ENCODE measurements at regions of chr7 and their contacts with region 1.

Region 1: DNA sequence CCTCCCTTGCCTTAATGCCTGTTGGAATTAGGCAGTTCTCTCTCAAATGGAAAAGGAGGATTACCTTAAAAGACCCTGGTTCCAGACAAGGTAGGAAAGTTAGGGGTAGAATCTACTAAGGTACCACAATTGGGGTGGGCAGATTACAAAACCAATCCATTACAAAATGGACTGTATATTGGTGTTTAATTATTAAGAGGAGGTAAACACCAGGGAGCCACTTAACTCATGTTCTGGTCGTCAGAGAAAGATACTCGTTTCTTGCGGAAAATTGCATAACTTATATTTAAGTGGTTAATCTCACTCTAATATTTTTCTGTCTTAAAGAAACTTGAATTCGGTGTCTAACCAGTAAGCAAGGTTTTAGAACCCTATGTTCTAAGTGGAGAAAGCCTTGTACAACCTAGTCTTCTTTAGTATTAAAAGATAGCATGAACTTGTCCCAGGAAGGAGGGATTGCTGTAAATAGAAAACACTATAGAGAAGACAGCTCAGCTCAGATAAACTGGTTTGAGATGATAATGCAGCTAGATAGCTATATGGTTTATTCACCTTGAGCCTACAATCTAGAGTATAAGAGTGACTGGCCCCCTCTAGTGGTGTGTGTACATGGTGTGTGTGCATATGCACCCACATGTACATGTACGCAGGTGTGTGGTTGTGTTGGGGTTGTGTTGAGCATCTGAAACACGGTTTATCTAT is 58.0 kb upstream of the STRIP2 start:
- DNase-seq: peak; percentile 75
- ATAC-seq: peak; percentile 75
- H3K4me3 Mint-ChIP-seq: no peak overlapping the region
- H3K27ac Mint-ChIP-seq: peak overlapping the region; percentile 79
- H3K4me1 Mint-ChIP-seq: peaks cover 48% of the 10 kb centered on the region
- H3K27me3 Mint-ChIP-seq: no peaks in the 10 kb centered on the region

Region 2: GRCh38 chr7:129238546-129238945 is 137.7 kb before region 1 on chr7:
- CTCF ChIA-PET with region 1: no interaction called
- DNase-seq: no peak
- ATAC-seq: no peak
- H3K4me3 Mint-ChIP-seq: no peak overlapping the region
- H3K27ac Mint-ChIP-seq: no peak overlapping the region
- H3K4me1 Mint-ChIP-seq: no peaks in the 10 kb centered on the region
- H3K27me3 Mint-ChIP-seq: no peaks in the 10 kb centered on the region

Region 3: DNA sequence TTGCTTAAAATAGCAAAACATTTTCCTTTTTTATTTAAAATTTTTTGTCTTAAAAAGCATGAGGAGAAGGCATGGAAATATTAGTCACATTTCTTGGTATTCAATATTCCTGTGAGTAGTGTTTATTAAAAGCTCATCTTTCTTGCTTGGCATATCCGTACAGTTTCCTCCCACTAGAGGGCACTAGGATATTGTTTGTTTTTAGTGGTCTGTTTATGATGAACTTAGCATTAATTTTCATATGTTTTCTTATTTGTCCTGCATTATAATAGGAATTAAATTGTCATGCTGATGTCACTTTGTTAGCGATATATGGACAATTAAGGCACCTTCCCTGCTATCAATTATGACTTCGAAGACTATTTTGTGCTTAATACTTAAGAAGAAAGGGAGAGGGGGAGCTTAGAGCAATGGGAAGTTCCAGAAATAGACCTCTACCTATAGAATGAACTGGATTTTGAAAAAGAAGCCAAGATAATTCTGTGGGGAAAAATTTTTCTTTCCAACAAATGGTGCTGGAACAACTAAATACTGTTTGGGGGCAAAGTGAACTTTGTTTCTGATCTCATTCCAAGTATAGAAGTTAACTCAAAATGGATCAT is 33.0 kb before region 1 on chr7:
- CTCF ChIA-PET with region 1: interaction called, 32 read pairs
- DNase-seq: no peak
- ATAC-seq: no peak
- H3K4me3 Mint-ChIP-seq: no peak overlapping the region
- H3K27ac Mint-ChIP-seq: no peak overlapping the region
- H3K4me1 Mint-ChIP-seq: peaks cover 41% of the 10 kb centered on the region
- H3K27me3 Mint-ChIP-seq: peaks cover 7% of the 10 kb centered on the region

Region 4: DNA sequence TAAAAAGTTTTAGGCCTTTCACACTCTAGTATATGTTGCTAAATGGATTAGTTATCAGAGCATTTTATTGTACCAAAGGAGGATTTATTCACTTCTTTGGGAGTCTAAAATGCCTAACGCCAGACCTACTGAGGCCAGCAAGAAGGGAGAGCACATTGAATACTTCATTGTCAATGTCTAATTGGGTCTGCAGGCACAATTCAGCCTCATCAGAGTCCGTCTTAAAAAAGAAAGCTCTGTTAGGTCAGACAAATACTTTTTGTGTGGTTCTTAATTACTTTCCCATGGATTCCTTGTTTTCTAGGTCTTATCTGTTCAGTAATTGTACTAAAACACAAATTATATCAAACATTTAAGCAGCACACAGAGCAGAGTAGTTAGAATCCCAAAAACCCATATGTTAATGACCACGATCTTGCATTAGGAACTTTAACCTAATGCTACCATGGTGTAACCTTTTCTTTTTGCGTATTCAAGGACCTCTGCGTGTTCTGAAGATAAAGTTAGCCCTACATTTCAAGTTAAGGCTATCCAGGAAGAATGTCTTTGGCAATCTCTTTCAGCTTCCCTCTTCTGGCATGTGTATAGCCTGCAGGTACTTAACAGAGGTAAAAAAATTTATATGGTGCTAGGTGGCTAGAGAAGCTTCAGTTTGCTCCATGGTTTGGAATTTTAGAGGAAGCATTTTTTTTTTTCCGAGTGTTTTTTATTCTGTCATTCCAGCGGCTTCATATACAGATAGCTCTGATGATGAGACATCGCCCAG is 12.3 kb after region 1 on chr7:
- CTCF ChIA-PET with region 1: interaction called, 16 read pairs
- DNase-seq: no peak
- ATAC-seq: no peak
- H3K4me3 Mint-ChIP-seq: no peak overlapping the region
- H3K27ac Mint-ChIP-seq: no peak overlapping the region
- H3K4me1 Mint-ChIP-seq: peaks cover 12% of the 10 kb centered on the region
- H3K27me3 Mint-ChIP-seq: no peaks in the 10 kb centered on the region

Region 5: DNA sequence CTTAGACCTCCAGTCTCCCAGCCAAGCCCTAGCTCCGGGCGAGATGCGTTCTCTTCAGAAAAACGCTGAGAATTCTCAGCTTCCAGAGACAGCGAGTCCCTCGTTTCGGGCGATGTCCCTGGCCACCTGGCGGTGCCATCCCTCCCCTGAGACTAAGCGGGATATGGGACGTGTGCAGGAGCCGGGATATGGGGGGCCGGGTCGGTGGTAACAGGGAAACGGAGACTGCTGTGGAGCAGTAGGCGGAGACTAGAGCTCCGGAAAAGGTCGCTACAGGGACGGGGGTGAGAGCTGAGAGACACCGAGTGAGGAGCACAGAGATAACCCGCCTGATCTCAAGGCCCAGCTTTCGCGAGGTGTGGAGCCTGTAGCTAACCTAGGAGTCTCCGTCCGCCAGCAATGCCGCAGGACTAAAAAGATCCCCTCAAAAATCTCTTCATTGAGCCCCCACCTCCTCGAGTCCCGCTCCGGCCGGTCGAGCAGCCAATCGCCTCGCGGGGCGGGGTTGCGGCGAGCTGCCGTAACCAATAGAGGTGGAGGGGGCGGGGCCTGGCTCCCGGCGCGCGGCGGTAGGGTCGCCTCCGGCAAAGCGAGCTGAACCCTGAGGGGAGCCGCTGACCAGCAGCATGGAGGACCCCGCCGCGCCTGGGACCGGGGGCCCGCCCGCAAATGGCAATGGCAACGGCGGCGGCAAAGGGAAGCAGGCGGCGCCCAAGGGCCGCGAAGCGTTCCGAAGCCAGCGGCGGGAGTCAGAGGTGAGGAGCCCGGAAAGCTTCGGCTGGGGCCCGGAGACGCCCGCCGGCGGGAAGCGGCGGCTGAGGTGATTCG is 57.8 kb after region 1 on chr7 and contains the start of gene STRIP2:
- CTCF ChIA-PET with region 1: interaction called, 33 read pairs
- DNase-seq: peak; percentile 95
- ATAC-seq: peak; percentile 95
- H3K4me3 Mint-ChIP-seq: peak within 1 kb of the TSS; percentile 91
- H3K27ac Mint-ChIP-seq: peak within 1 kb of the TSS; percentile 82
- H3K4me1 Mint-ChIP-seq: peaks cover 34% of the 10 kb centered on the region
- H3K27me3 Mint-ChIP-seq: peaks cover 9% of the 10 kb centered on the region
- total RNA-seq, gene STRIP2: 15.6 to 19.0 TPM

Region 6: GRCh38 chr7:129468087-129468486 is 91.9 kb after region 1 on chr7:
- CTCF ChIA-PET with region 1: interaction called, 90 read pairs
- DNase-seq: no peak
- ATAC-seq: no peak
- H3K4me3 Mint-ChIP-seq: no peak overlapping the region
- H3K27ac Mint-ChIP-seq: peak overlapping the region; percentile 67
- H3K4me1 Mint-ChIP-seq: peaks cover 15% of the 10 kb centered on the region
- H3K27me3 Mint-ChIP-seq: no peaks in the 10 kb centered on the region

Region 7: DNA sequence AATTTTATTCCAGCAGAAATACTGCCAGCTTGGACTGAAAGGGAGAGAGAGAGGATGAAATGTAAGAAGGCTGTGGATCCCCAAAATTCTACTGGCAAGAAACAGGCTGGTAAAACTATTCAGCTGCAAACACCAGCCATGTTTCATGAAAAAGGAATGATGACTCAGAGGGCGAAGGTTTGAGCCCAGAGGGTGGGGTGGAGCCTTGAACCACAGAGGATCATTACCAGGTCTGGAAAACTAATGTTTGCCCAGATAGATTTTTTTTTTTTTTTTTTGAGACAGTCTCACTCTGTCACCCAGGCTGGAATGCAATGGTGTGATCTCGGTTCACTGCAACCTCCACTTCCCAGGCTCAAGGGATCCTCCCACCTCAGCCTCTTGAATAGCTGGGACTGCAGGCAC is 193.6 kb after region 1 on chr7:
- CTCF ChIA-PET with region 1: no interaction called
- DNase-seq: no peak
- ATAC-seq: no peak
- H3K4me3 Mint-ChIP-seq: no peak overlapping the region
- H3K27ac Mint-ChIP-seq: no peak overlapping the region
- H3K4me1 Mint-ChIP-seq: no peaks in the 10 kb centered on the region
- H3K27me3 Mint-ChIP-seq: peaks cover 20% of the 10 kb centered on the region

Measured in activated CD8-positive, alpha-beta memory T cell treated with anti-CD3 and anti-CD28 coated beads, Interleukin-2, amount 10 ng/mL, durations not matched to agents 7 days and 5 days (primary cell).